AG04449 (cell line): ENCODE measurements at regions of chr7 and their contacts with region 1.

Region 1: DNA sequence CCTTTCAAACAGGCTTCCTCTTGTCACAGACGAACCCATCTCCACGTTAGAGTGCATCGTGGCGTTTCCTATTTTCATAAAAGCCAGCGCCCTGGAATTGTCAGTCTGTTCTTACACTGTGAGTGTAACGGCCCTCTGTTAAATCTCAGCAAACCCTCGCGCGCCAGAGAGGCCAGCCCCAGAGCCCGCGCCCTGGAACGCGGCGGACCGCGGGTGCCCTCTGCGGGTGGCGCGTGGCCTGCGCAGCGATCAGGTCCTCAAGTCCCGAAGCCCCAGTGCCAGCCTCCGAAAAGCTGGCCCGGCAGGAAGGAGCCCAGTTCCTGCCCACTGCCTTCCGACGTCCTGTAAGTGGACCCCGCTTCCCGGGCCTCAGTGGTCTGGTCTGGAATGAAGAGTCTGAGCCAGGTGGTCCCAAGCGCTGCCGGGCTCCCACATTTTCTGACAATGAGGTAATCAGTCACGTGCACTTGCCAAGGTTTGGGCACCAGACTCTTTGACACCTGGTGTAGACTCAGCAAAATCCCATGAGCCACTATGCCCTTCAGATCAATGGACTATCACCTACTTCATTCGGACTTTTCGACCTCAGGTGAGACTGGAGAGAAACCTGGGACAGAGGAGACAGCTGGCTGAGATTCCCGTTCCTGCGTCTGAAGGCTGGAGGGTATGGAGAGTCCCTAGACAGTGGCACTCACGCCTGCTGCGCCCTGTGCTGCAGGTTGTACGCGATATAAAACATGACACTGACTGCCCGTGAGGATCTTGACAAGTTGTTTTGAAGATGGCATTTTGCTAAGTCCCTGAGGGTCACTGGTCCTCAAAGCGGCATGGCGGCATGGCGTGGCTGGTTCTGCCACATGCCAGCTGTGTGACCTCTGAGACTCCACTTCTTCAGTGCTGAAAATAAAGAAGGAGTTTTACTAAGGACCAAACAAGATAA is 109.4 kb upstream of the LANCL2 start:
- DNase-seq: no peak
- H3K4me3 ChIP-seq: peak overlapping the region; percentile 68
- CTCF ChIP-seq: peak; percentile 96

Region 2: GRCh38 chr7:54764861-54765260 is 490.9 kb before region 1 on chr7:
- CTCF ChIA-PET with region 1: interaction called, 555 read pairs
- POLR2A ChIA-PET with region 1: interaction called, 5 read pairs
- DNase-seq: no peak
- H3K4me3 ChIP-seq: no peak overlapping the region
- CTCF ChIP-seq: no peak

Region 3: DNA sequence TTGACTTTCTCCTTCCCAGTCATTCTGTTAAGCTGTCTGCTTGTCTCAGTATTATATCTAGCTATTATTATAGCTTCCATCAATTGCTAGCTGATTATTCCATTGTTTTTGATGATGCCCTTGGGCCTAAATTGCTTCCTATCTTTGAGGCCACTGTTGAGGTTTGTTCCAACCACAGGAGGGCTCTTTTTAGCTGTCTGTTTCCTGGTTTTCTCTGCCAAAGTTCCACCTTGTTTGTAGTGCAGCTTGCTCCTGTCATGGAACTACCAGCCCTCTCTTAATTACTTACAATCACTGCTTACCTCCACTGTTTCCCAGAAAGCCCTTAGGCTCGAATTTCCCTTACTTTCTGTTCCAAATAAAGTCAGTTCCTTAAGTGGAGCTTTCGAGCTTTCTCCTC is 378.1 kb before region 1 on chr7:
- CTCF ChIA-PET with region 1: interaction called, 20 read pairs
- POLR2A ChIA-PET with region 1: no interaction called
- DNase-seq: no peak
- H3K4me3 ChIP-seq: no peak overlapping the region
- CTCF ChIP-seq: no peak

Region 4: DNA sequence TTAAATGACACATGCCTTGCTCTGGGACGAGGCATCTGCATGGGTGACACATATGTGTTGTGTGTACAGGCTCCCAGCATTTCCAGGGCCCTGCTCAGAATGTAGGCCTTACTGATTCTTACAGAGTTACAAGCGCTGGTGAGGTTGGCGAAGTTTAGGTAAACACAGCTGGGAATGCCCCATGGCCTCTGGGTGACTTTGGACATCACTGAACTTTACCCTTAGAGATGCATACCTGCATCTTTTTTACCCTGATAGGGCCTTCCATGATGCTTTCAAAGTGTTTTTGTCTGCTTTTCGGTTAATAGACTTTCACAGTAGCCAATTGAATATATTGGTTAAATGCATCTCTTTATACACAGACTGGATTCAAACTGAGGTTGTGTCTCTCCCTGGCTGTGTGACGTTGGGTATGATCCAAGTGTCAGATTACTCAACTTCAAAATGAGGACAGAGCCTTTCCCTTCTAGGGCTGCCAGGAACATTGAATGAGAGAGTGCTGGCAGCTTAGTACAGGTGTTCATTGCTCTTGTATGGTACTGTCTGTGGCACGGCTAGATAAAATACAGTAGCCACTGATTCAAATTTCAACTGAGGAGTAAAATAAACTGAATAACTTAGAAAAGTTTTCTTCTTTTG is 207.4 kb before region 1 on chr7:
- CTCF ChIA-PET with region 1: interaction called, 150 read pairs
- POLR2A ChIA-PET with region 1: interaction called, 3 read pairs
- DNase-seq: no peak
- H3K4me3 ChIP-seq: no peak overlapping the region
- CTCF ChIP-seq: no peak

Region 5: GRCh38 chr7:55110661-55111361 is 145.0 kb before region 1 on chr7:
- CTCF ChIA-PET with region 1: interaction called, 17 read pairs
- POLR2A ChIA-PET with region 1: no interaction called
- DNase-seq: peak; percentile 58
- H3K4me3 ChIP-seq: peak overlapping the region; percentile 10
- CTCF ChIP-seq: no peak

Region 6: GRCh38 chr7:55185941-55186609 is 69.7 kb before region 1 on chr7:
- CTCF ChIA-PET with region 1: interaction called, 13 read pairs
- POLR2A ChIA-PET with region 1: no interaction called
- DNase-seq: peak; percentile 68
- H3K4me3 ChIP-seq: no peak overlapping the region
- CTCF ChIP-seq: no peak

Region 7: DNA sequence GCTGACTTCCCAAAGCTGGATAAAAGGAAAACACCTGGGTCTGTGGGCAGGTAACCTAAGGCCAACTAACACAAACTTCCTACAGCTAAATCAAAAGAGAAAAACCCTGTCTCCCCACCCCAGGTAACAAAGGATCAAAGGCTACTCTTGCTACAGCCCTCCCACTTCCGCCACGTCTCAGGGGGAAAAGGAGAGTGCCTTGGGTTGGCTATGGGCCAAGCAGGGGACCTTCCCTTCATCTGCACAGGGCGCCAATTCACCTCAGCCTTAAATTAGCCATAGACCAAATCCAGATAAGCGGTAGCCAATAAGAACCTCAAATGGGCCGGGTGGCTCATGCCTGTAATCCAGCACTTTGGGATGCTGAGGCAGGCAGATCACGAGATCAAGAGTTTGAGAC is 40.3 kb after region 1 on chr7:
- CTCF ChIA-PET with region 1: no interaction called
- POLR2A ChIA-PET with region 1: no interaction called
- DNase-seq: no peak
- H3K4me3 ChIP-seq: no peak overlapping the region
- CTCF ChIP-seq: no peak

Region 8: GRCh38 chr7:55314962-55315685 is 59.4 kb after region 1 on chr7:
- CTCF ChIA-PET with region 1: no interaction called
- POLR2A ChIA-PET with region 1: no interaction called
- DNase-seq: no peak
- H3K4me3 ChIP-seq: no peak overlapping the region
- CTCF ChIP-seq: no peak

Region 9: GRCh38 chr7:55423277-55423711 is 167.5 kb after region 1 on chr7:
- CTCF ChIA-PET with region 1: no interaction called
- POLR2A ChIA-PET with region 1: no interaction called
- DNase-seq: no peak
- H3K4me3 ChIP-seq: no peak overlapping the region
- CTCF ChIP-seq: peak; percentile 44